BJ (cell line): ENCODE measurements at regions of chr5 and their contacts with region 1.

Region 1: GRCh38 chr5:172188033-172188892 is at the start of gene STK10:
- DNase-seq: peak; percentile 64
- H3K4me3 ChIP-seq: peak within 1 kb of the TSS; percentile 90
- H3K27me3 ChIP-seq: no peaks in the 10 kb centered on the region
- CTCF ChIP-seq: peak; percentile 85
- polyA plus RNA-seq, gene STK10: 12.1 and 14.3 TPM in 2 replicates

Region 2: DNA sequence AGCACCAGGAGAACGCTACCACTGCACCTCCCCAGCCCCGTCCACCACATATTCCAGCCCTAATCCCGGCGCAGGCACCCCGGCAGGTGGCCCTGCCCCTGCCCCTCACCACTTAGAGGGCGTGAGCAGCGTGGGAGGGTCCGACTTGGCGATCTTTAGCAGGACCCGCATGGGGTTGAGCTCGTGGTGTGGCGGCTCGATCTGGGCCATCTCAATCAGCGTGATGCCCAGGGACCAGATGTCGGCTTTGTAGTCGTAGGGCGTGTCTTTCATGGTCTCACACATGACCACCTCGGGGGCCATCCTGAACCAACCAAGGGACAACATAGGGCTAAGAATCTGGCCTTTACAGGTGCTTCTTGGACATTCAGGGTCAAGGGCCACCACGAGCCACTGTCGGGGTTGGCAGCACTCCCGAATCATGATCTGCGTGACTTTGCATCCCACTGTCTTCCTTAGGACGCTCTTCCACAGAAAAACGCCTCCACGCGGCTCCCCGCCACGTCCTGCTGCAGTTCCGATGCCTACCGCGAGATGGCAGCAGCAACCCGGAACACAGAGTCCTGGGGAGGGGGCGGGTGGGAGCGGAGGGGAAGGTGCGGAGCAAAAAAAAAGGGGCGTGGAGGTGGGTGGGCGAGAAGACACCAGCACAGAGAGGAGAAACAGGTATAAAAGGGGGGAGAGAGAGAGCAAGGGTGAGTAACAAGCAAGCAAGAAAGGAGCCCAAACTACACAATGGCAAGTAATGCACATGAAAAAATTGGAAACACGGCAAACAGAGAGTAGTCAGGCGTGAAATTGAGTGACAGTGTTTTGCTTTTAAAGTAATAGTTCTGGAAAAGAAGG is 81.5 kb before region 1 on chr5:
- CTCF ChIA-PET with region 1: interaction called, 106 read pairs
- POLR2A ChIA-PET with region 1: no interaction called
- DNase-seq: no peak
- H3K4me3 ChIP-seq: peak overlapping the region; percentile 7; the same call in 1 of the 2 replicates
- H3K27me3 ChIP-seq: no peaks in the 10 kb centered on the region
- CTCF ChIP-seq: peak; percentile 99

Region 3: DNA sequence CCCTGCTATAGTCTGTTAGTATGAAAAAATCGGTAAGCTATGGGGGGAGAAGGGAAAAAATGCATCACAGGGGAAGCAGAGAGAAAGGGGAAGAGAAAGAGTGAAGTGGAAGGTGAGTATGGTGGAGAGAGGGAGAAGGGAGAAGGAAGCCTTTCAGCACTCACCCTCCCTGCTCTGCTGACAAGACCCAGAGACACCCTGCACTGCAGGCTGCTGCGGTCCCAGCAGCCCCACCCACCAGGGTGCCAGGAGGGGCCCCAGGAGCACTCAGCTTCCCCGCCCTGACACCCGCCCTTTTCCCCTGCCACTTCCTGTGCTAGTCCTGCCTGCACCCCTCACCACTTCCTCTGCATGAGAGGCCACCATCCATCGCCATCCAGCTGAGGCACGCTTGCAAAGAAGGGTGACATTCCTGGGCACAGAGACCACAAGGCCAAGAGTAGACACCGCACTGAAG is 13.0 kb before region 1 on chr5:
- CTCF ChIA-PET with region 1: interaction called, 13 read pairs
- POLR2A ChIA-PET with region 1: no interaction called
- DNase-seq: no peak
- H3K4me3 ChIP-seq: no peak overlapping the region
- H3K27me3 ChIP-seq: no peaks in the 10 kb centered on the region
- CTCF ChIP-seq: no peak

Region 4: DNA sequence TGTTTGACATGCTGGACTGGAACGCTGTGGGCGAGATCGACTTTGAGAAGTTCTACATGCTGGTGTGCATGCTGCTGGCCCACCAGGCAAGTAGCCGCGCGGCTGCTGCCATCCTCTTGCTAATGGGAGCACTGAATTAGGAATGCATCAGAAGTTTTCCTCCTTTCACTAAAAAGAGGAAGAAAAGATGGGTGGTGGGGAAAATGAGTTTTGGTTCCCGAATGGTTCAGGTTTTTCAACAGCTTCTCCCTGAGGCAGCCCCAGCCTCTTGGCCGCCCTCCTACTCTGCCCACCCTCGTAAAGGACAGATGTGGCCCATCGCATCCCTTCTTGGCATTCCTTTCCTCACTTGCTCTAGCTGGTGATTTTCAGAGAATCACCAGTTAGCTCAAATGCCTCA is 11.2 kb after region 1 on chr5:
- CTCF ChIA-PET with region 1: interaction called, 20 read pairs
- POLR2A ChIA-PET with region 1: interaction called, 3 read pairs
- DNase-seq: no peak
- H3K4me3 ChIP-seq: no peak overlapping the region
- H3K27me3 ChIP-seq: no peaks in the 10 kb centered on the region
- CTCF ChIP-seq: no peak

Region 5: GRCh38 chr5:172266676-172267092 is 78.4 kb after region 1 on chr5:
- CTCF ChIA-PET with region 1: no interaction called
- POLR2A ChIA-PET with region 1: interaction called, 11 read pairs
- DNase-seq: no peak
- H3K4me3 ChIP-seq: no peak overlapping the region
- H3K27me3 ChIP-seq: no peaks in the 10 kb centered on the region
- CTCF ChIP-seq: no peak

Region 6: GRCh38 chr5:172283020-172283861 is 95.0 kb after region 1 on chr5 and contains the start of gene UBTD2:
- CTCF ChIA-PET with region 1: interaction called, 11 read pairs
- POLR2A ChIA-PET with region 1: no interaction called
- DNase-seq: no peak
- H3K4me3 ChIP-seq: peak within 1 kb of the TSS; percentile 89
- H3K27me3 ChIP-seq: no peaks in the 10 kb centered on the region
- CTCF ChIP-seq: peak; percentile 21; the same call in 1 of the 2 replicates
- polyA plus RNA-seq, gene UBTD2: 9.4 and 18.8 TPM in 2 replicates

Region 7: DNA sequence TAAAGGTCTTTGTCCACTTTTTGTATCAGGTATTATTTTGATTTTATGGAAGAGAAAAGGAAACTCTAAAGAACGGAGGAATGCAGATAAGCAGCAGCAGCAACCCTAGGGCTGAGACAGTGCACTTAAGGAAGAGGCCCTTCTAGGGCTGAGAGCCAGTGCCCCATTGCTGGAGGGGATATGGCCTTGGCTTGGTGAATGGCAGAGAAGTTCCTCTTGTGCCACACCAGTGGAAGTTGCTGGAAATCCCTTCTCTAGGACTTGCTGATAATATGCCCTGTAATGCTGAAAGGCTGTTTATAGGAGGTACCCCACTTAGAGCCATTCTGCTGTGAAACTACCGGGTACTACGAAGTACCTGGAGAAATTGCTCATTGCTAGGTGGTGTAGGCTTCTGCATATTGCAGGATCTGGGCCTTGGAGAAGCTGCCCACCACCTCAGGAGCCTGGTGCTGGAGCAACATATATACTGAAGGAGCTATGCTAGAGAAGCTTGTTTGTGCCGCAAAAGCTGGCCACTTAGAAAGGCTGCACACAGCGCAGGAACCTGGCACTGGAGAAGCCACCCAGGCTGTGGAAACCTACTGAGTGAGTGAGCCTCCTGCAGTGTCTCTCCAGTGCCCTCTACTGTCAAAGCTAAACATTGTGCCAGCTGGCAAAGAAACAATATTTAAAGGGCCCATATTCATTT is 104.9 kb after region 1 on chr5:
- CTCF ChIA-PET with region 1: interaction called, 10 read pairs
- POLR2A ChIA-PET with region 1: no interaction called
- DNase-seq: no peak
- H3K4me3 ChIP-seq: no peak overlapping the region
- H3K27me3 ChIP-seq: no peaks in the 10 kb centered on the region; the same call in 1 of the 2 replicates
- CTCF ChIP-seq: peak; percentile 94

Region 8: GRCh38 chr5:172389578-172390112 is 201.4 kb after region 1 on chr5:
- CTCF ChIA-PET with region 1: no interaction called
- POLR2A ChIA-PET with region 1: no interaction called
- DNase-seq: no peak
- H3K4me3 ChIP-seq: no peak overlapping the region
- H3K27me3 ChIP-seq: no peaks in the 10 kb centered on the region
- CTCF ChIP-seq: no peak